ENCODE measurements at regions of chr2 and their contacts with region 1.

Region 1: GRCh38 chr2:17646081-17646554 is 105.6 kb downstream of the VSNL1 start:
- DNase-seq: peak; percentile 66
- ATAC-seq: peak; percentile 68
- H3K4me3 Mint-ChIP-seq: no peak overlapping the region
- H3K27ac Mint-ChIP-seq: no peak overlapping the region
- H3K4me1 Mint-ChIP-seq: peaks cover 3% of the 10 kb centered on the region
- H3K27me3 Mint-ChIP-seq: no peaks in the 10 kb centered on the region

Region 2: GRCh38 chr2:17628349-17629261 is 17.5 kb before region 1 on chr2:
- CTCF ChIA-PET with region 1: interaction called, 10 read pairs
- POLR2A ChIA-PET with region 1: no interaction called
- DNase-seq: no peak
- ATAC-seq: no peak
- H3K4me3 Mint-ChIP-seq: no peak overlapping the region
- H3K27ac Mint-ChIP-seq: no peak overlapping the region
- H3K4me1 Mint-ChIP-seq: peaks cover 2% of the 10 kb centered on the region
- H3K27me3 Mint-ChIP-seq: no peaks in the 10 kb centered on the region

Region 3: GRCh38 chr2:17634997-17635396 is 11.1 kb before region 1 on chr2:
- CTCF ChIA-PET with region 1: interaction called, 10 read pairs
- POLR2A ChIA-PET with region 1: no interaction called
- DNase-seq: no peak
- ATAC-seq: no peak
- H3K4me3 Mint-ChIP-seq: no peak overlapping the region
- H3K27ac Mint-ChIP-seq: no peak overlapping the region
- H3K4me1 Mint-ChIP-seq: no peaks in the 10 kb centered on the region
- H3K27me3 Mint-ChIP-seq: no peaks in the 10 kb centered on the region

Region 4: GRCh38 chr2:17658251-17658843 is 12.2 kb after region 1 on chr2:
- CTCF ChIA-PET with region 1: interaction called, 13 read pairs
- POLR2A ChIA-PET with region 1: no interaction called
- DNase-seq: no peak
- ATAC-seq: no peak
- H3K4me3 Mint-ChIP-seq: no peak overlapping the region
- H3K27ac Mint-ChIP-seq: no peak overlapping the region
- H3K4me1 Mint-ChIP-seq: peaks cover 16% of the 10 kb centered on the region
- H3K27me3 Mint-ChIP-seq: no peaks in the 10 kb centered on the region

Region 5: DNA sequence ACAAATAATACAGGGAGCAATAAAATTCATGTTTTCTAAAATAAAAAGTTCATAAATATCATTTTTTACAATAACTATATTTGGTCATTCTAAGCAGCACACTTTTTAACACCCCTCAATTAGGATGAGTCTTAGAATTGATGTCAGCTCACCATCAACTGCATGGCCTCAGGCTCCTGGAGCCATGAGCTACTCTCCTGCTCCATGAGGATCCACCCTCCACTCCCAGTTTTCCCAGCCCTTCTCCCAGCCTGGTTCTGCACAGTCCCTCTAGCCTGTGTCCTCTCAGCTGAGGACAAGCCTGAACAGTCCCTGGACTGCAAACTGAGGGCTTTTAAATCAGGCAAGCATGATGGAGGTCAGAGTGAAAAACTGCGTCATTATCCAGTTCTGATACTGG is 18.4 kb after region 1 on chr2:
- CTCF ChIA-PET with region 1: interaction called, 119 read pairs
- POLR2A ChIA-PET with region 1: no interaction called
- DNase-seq: no peak
- ATAC-seq: no peak
- H3K4me3 Mint-ChIP-seq: no peak overlapping the region
- H3K27ac Mint-ChIP-seq: no peak overlapping the region
- H3K4me1 Mint-ChIP-seq: peaks cover 1% of the 10 kb centered on the region
- H3K27me3 Mint-ChIP-seq: no peaks in the 10 kb centered on the region

Region 6: DNA sequence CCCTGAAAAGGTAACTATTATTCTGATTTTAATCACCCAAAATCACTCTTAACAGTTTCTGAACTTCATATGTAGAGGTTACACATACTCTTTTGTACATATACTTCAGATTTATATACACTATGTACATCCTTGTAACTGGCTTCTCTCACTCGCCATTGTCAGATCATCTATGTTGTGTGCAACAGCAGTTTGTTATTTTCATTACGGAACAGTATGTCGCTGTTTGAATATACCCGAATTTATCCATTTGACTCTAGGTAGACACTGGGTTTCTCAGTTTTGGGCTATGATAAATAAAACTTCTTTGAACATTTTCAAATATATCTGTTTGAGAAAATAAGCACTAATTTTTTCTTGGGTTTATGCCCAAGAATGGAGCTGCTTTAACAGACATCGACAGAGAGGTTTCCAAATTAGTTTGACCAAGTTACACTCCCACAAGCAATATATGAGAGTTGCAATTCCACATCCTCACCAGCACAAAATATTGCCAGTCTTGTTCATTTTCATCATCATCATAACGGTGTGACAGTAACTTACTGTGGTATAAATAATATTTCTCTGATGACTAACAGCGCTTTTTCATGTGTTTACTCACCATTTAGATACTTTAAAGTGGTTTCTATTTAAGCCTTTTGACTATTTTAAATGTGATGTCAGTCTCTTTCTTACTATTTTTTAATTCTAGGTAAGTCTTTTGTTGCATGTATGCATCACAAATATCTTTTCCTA is 26.6 kb after region 1 on chr2:
- CTCF ChIA-PET with region 1: interaction called, 119 read pairs
- POLR2A ChIA-PET with region 1: no interaction called
- DNase-seq: no peak
- ATAC-seq: no peak
- H3K4me3 Mint-ChIP-seq: no peak overlapping the region
- H3K27ac Mint-ChIP-seq: no peak overlapping the region
- H3K4me1 Mint-ChIP-seq: no peaks in the 10 kb centered on the region
- H3K27me3 Mint-ChIP-seq: no peaks in the 10 kb centered on the region

Measured in activated CD8-positive, alpha-beta T cell treated with anti-CD3 and anti-CD28 coated beads, Interleukin-2, amount 10 ng/mL, durations not matched to agents 7 days and 5 days (primary cell).